AG04449 (cell line): ENCODE measurements at regions of chr7 and their contacts with region 1.

Region 1: DNA sequence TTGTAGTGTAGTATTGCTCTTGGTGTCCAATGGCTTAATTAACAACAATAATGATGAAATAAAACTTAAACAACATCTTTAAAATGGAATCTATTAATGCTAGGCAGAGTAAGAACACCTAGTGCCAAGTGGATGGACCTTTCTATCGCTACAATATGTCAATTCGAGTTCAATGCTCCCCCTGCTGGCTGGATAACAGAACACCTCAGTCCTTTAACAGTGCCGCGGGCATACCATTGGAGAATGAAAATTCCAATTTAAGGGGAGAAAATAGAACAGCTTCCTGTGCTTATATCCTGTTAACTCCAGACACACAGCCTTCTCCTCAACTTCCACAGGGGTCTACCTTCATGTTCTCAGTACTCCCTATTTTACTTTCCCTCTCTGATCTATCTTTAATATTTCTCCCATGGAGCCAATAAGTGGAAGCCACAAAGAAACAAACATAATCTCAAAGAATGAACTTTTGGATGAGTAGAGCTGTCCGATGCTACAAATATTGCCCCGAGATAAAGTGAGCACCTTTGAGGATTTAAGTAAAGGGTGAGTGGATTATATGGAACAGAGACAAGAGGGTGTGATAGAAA is 41.4 kb downstream of the COL1A2 start:
- DNase-seq: no peak
- H3K4me3 ChIP-seq: no peak overlapping the region
- CTCF ChIP-seq: peak; percentile 69

Region 2: DNA sequence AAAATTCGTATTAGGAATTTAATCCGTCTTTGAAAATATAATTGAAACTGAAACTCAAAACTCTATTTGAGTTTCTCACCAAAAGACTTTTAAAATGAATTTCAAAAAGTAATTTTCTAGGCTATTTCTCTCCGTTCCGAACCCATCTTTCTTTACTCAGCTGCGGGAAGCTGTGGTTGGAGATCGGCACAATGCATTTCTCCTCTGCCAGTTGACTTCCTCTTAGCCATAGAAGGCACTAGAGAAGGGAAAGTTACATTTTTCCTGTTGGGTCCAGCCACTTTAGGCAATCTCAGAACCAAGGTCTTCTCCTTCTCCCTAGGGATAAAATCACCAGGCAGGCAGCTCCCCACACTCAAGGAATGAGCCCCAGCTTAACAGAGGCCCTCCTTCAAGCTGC is 175.0 kb before region 1 on chr7:
- CTCF ChIA-PET with region 1: interaction called, 11 read pairs
- POLR2A ChIA-PET with region 1: no interaction called
- DNase-seq: no peak
- H3K4me3 ChIP-seq: no peak overlapping the region
- CTCF ChIP-seq: no peak

Region 3: GRCh38 chr7:94423863-94424735 is 12.0 kb before region 1 on chr7:
- CTCF ChIA-PET with region 1: interaction called, 11 read pairs
- POLR2A ChIA-PET with region 1: interaction called, 5 read pairs
- DNase-seq: peak; percentile 47
- H3K4me3 ChIP-seq: no peak overlapping the region
- CTCF ChIP-seq: no peak

Region 4: DNA sequence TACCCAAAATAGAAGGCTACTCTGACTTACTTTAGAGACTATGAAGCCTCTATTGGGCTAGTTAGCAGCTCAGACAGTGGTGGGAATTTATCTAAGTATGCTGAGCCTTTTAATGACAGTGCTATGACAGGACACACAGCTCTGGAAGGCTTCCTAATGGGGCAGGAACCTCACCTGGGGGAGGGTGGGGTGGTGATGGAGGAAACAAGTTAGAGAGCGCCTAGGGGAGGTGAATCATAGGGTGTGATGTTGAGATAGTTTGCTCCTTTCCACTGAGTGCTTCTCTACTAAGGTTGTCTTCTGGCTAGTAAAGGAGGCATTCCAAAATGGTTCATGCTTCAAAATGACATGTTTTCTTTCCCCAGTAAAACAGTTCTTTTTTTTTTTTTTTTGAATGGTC is 513.4 kb after region 1 on chr7:
- CTCF ChIA-PET with region 1: no interaction called
- POLR2A ChIA-PET with region 1: no interaction called
- DNase-seq: no peak
- H3K4me3 ChIP-seq: no peak overlapping the region
- CTCF ChIP-seq: no peak